Left cardiac atrium (tissue), 4 donors: ENCODE measurements at regions of chr7 and their contacts with region 1.

Region 1: GRCh38 chr7:135509903-135510602 is at the start of gene CNOT4:
- DNase-seq: peak; percentile 97
- ATAC-seq: peak; percentile 99
- total RNA-seq, gene CNOT4: 25.0 to 28.0 TPM

Region 2: GRCh38 chr7:135385209-135385608 is 124.8 kb before region 1 on chr7:
- intact Hi-C with region 1: loop called in 1 of 2 experiments (anchors 10 kb)
- DNase-seq: peak; percentile 44
- ATAC-seq: peak in 1 of 2 donors; percentile 69

Region 3: DNA sequence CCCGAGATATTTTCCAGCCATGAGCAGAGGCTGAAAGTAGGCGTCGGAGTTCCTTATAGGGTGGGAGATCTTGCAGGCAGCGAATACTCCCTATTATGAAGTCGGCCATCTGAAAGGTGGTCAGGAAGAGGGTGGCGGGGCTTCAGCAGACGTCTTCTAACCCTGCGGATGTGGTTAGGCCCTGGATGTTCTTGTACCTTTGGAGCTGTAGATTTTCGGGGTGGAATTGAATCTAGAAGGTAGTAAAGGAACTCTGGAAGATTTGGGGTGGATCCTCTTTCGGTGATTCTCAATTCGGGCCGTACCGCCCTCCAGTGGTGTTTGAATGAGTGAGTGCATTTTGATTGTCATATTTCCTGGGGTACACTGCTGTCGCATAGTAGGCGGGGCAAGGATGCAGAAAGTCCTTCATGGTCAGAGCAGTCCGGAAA is 48.3 kb after region 1 on chr7:
- intact Hi-C with region 1: loop called in 1 of 2 experiments (anchors 5 kb)
- DNase-seq: peak; percentile 58
- ATAC-seq: peak; percentile 74 to 79